Left colon (tissue), 2 donors: ENCODE measurements at regions of chr11 and their contacts with region 1.

Region 1: GRCh38 chr11:30365793-30366517 is 43.1 kb downstream of the ARL14EP start:
- DNase-seq: no peak
- ATAC-seq: no peak

Region 2: GRCh38 chr11:30478923-30479322 is 113.0 kb after region 1 on chr11:
- intact Hi-C with region 1: no loop called
- DNase-seq: no peak
- ATAC-seq: no peak

Region 3: GRCh38 chr11:30635401-30635989 is 269.5 kb after region 1 on chr11:
- intact Hi-C with region 1: loop called in 1 of 2 experiments (anchors 10 kb)
- DNase-seq: peak in 1 of 2 donors; percentile 22
- ATAC-seq: no peak

Region 4: GRCh38 chr11:30666817-30667216 is 300.9 kb after region 1 on chr11:
- intact Hi-C with region 1: loop called in 1 of 2 experiments (anchors 10 kb)
- DNase-seq: no peak
- ATAC-seq: no peak

Region 5: DNA sequence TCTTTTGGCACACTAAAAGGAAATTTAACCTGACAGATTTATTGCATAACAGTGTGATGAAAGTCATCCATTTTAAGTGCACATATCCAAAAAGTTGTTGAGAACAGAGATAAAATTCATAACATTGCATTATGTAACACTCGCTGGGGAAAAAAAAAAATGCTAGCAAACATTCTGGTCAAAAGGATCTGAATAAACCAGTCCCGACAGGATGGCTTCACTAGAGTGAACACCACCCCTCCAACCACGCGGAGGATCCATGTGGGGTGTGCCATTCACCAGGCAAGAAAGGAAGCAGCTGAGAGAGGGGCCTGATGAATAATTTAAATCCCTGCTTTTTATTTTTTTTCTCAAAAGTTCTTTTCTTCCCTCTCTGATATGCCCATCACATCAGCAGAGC is 744.9 kb after region 1 on chr11:
- intact Hi-C with region 1: no loop called
- DNase-seq: no peak
- ATAC-seq: no peak